ENCODE measurements at regions of chr10 and their contacts with region 1.

Region 1: GRCh38 chr10:119596537-119597404 is at the start of gene TIAL1:
- DNase-seq: peak; percentile 98
- H3K4me3 Mint-ChIP-seq: peak within 1 kb of the TSS; percentile 93
- H3K27ac Mint-ChIP-seq: peak within 1 kb of the TSS; percentile 98
- H3K4me1 Mint-ChIP-seq: peaks cover 47% of the 10 kb centered on the region
- H3K27me3 Mint-ChIP-seq: no peaks in the 10 kb centered on the region
- total RNA-seq, gene TIAL1: 184 to 192 TPM

Region 2: GRCh38 chr10:119178372-119179119 is 418.2 kb before region 1 on chr10 and contains the start of gene PRDX3:
- CTCF ChIA-PET with region 1: no interaction called
- intact Hi-C with region 1: loop called (anchors 1 kb)
- DNase-seq: peak; percentile 96
- H3K4me3 Mint-ChIP-seq: peak within 1 kb of the TSS; percentile 93
- H3K27ac Mint-ChIP-seq: peak within 1 kb of the TSS; percentile 95
- H3K4me1 Mint-ChIP-seq: peaks cover 42% of the 10 kb centered on the region
- H3K27me3 Mint-ChIP-seq: no peaks in the 10 kb centered on the region
- total RNA-seq, gene PRDX3: 215 to 216 TPM

Region 3: GRCh38 chr10:119517235-119518141 is 79.3 kb before region 1 on chr10:
- CTCF ChIA-PET with region 1: interaction called, 3 read pairs
- intact Hi-C with region 1: loop called (anchors 1 kb)
- DNase-seq: peak; percentile 83
- H3K4me3 Mint-ChIP-seq: peak overlapping the region; percentile 43
- H3K27ac Mint-ChIP-seq: peak overlapping the region; percentile 90
- H3K4me1 Mint-ChIP-seq: peaks cover 70% of the 10 kb centered on the region
- H3K27me3 Mint-ChIP-seq: no peaks in the 10 kb centered on the region

Region 4: GRCh38 chr10:119650692-119651513 is 54.1 kb after region 1 on chr10 and contains the start of gene BAG3:
- CTCF ChIA-PET with region 1: interaction called, 6 read pairs
- intact Hi-C with region 1: loop called (anchors 1 kb)
- DNase-seq: peak; percentile 82
- H3K4me3 Mint-ChIP-seq: peak within 1 kb of the TSS; percentile 97
- H3K27ac Mint-ChIP-seq: peak within 1 kb of the TSS; percentile 95
- H3K4me1 Mint-ChIP-seq: peaks cover 38% of the 10 kb centered on the region
- H3K27me3 Mint-ChIP-seq: no peaks in the 10 kb centered on the region
- total RNA-seq, gene BAG3: 20.9 to 24.3 TPM

Region 5: GRCh38 chr10:119872860-119873681 is 276.3 kb after region 1 on chr10:
- CTCF ChIA-PET with region 1: no interaction called
- intact Hi-C with region 1: loop called (anchors 2 kb)
- DNase-seq: peak; percentile 84
- H3K4me3 Mint-ChIP-seq: peak overlapping the region; percentile 83
- H3K27ac Mint-ChIP-seq: peak overlapping the region; percentile 84
- H3K4me1 Mint-ChIP-seq: peaks cover 38% of the 10 kb centered on the region
- H3K27me3 Mint-ChIP-seq: no peaks in the 10 kb centered on the region

Measured in activated naive CD4-positive, alpha-beta T cell treated with anti-CD3 and anti-CD28 coated beads for 36 hours (primary cell).